Activated CD4-positive, alpha-beta T cell treated with anti-CD3 and anti-CD28 coated beads for 36 hours (primary cell): ENCODE measurements at regions of chr22 and their contacts with region 1.

Region 1: GRCh38 chr22:30754971-30755756 is 60.5 kb downstream of the OSBP2 start:
- DNase-seq: peak; percentile 78
- ATAC-seq: peak; percentile 92
- H3K4me3 Mint-ChIP-seq: no peak overlapping the region
- H3K27ac Mint-ChIP-seq: no peak overlapping the region
- H3K4me1 Mint-ChIP-seq: no peaks in the 10 kb centered on the region
- H3K27me3 Mint-ChIP-seq: no peaks in the 10 kb centered on the region

Region 2: GRCh38 chr22:30196141-30196879 is 558.9 kb before region 1 on chr22:
- CTCF ChIA-PET with region 1: no interaction called
- POLR2A ChIA-PET with region 1: no interaction called
- intact Hi-C with region 1: no loop called
- DNase-seq: peak; percentile 66
- ATAC-seq: peak; percentile 75
- H3K4me3 Mint-ChIP-seq: peak overlapping the region; percentile 25
- H3K27ac Mint-ChIP-seq: peak overlapping the region; percentile 90
- H3K4me1 Mint-ChIP-seq: peaks cover 56% of the 10 kb centered on the region
- H3K27me3 Mint-ChIP-seq: no peaks in the 10 kb centered on the region

Region 3: GRCh38 chr22:30643055-30643875 is 111.9 kb before region 1 on chr22:
- CTCF ChIA-PET with region 1: interaction called, 97 read pairs
- POLR2A ChIA-PET with region 1: no interaction called
- intact Hi-C with region 1: no loop called
- DNase-seq: no peak
- ATAC-seq: no peak
- H3K4me3 Mint-ChIP-seq: peak overlapping the region; percentile 8
- H3K27ac Mint-ChIP-seq: peak overlapping the region; percentile 84
- H3K4me1 Mint-ChIP-seq: peaks cover 24% of the 10 kb centered on the region
- H3K27me3 Mint-ChIP-seq: no peaks in the 10 kb centered on the region

Region 4: DNA sequence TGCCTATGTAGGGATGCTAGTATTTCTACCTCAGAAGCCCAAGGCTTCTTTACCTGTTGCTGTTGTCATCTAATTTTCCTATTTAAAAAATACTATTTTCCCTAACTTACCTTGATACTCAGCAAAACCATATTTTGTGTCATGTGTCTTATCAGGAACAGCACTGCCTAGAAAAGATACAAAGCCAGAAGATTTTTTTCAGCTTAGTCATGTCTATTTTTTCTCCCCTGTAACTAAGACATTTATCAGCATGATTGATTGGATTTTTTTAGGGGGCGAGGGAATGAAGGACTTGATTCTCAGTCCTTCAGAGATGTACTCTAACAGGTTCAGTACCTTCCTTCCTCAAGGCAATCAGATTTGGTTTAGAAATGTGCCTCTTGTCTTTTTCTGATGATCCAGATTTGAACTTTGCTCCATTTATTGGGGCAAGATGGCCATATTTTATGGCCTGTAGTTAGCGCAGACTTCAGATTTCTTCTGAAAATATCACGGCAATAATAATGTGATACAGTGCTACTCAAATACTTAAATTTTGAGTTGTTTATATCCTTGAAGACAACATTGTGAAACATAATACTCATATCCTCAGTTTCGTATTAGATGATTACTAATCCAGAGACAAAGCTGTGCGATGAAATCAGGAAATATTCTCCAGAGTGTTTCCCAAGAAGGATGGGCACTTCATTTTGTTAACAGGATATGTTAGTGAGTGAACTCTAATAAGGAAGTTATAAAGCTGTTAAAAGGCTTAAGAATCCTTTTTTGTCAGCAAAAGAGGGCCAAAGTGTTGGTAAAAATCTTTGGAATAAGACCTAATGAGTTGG is 540.9 kb after region 1 on chr22:
- CTCF ChIA-PET with region 1: no interaction called
- POLR2A ChIA-PET with region 1: no interaction called
- intact Hi-C with region 1: no loop called
- DNase-seq: no peak
- ATAC-seq: peak; percentile 10
- H3K4me3 Mint-ChIP-seq: peak overlapping the region; percentile 51
- H3K27ac Mint-ChIP-seq: peak overlapping the region; percentile 75
- H3K4me1 Mint-ChIP-seq: peaks cover 54% of the 10 kb centered on the region
- H3K27me3 Mint-ChIP-seq: no peaks in the 10 kb centered on the region